ENCODE measurements at regions of chr13 and their contacts with region 1.

Region 1: DNA sequence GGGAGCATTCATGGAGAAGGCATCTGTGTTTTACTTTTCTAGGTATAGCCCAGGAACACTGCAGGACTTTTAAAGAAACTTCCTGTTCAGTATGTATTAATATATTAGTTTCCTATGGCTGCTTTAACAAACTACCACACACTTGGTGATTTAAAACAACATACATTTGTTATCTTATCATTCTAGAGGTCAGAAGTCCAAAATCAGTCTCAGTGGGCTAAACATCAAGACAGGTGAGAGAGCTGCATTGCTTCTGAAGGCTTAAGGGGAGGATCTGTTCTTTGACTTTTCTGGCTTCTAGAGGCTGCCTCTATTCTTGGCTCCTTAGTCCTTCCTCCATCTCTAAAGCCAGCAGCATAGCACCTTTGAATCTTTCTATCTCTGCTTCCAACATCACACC is 37.6 kb upstream of the DIAPH3 start:
- DNase-seq: no peak
- ATAC-seq: no peak
- H3K4me3 ChIP-seq: no peak overlapping the region
- H3K27ac ChIP-seq: no peak overlapping the region
- H3K4me1 ChIP-seq: no peaks in the 10 kb centered on the region
- H3K27me3 ChIP-seq: peaks cover 30% of the 10 kb centered on the region
- CTCF ChIP-seq: no peak

Region 2: GRCh38 chr13:60028021-60028420 is 173.3 kb before region 1 on chr13:
- CTCF ChIA-PET with region 1: no interaction called
- POLR2A ChIA-PET with region 1: interaction called, 21 read pairs
- intact Hi-C with region 1: no loop called
- DNase-seq: no peak
- ATAC-seq: no peak
- H3K4me3 ChIP-seq: no peak overlapping the region
- H3K27ac ChIP-seq: no peak overlapping the region
- H3K4me1 ChIP-seq: no peaks in the 10 kb centered on the region
- H3K27me3 ChIP-seq: no peaks in the 10 kb centered on the region
- CTCF ChIP-seq: no peak

Region 3: DNA sequence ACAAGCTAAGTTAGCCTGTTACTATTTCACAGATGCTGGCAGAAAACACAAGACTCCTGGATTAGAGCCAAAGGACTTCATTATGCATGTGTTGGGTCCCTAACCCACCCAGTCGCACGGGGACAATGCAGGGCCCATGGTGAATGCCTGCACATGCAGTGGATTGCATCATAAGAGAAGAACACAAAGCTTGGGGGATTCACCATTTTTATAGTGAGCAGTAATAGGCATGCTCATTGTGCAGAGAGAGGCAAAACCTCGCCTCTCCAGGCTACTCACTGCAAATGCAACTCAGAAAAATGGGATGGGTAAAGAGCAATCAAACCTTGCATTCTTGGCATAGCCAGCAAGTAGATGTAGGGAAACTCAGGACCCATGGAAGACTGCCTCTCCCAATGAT is 153.4 kb before region 1 on chr13:
- CTCF ChIA-PET with region 1: no interaction called
- POLR2A ChIA-PET with region 1: no interaction called
- intact Hi-C with region 1: no loop called
- DNase-seq: no peak
- ATAC-seq: peak; percentile 64
- H3K4me3 ChIP-seq: no peak overlapping the region
- H3K27ac ChIP-seq: peak overlapping the region; percentile 37
- H3K4me1 ChIP-seq: no peaks in the 10 kb centered on the region
- H3K27me3 ChIP-seq: no peaks in the 10 kb centered on the region
- CTCF ChIP-seq: no peak

Region 4: GRCh38 chr13:60260440-60260839 is 59.2 kb after region 1 on chr13:
- CTCF ChIA-PET with region 1: no interaction called
- POLR2A ChIA-PET with region 1: no interaction called
- intact Hi-C with region 1: no loop called
- DNase-seq: no peak
- ATAC-seq: no peak
- H3K4me3 ChIP-seq: no peak overlapping the region
- H3K27ac ChIP-seq: no peak overlapping the region
- H3K4me1 ChIP-seq: no peaks in the 10 kb centered on the region
- H3K27me3 ChIP-seq: no peaks in the 10 kb centered on the region
- CTCF ChIP-seq: no peak

Measured in PC-3 (cell line).